Activated CD4-positive, alpha-beta T cell treated with anti-CD3 and anti-CD28 coated beads for 36 hours (primary cell): ENCODE measurements at regions of chr7 and their contacts with region 1.

Region 1: DNA sequence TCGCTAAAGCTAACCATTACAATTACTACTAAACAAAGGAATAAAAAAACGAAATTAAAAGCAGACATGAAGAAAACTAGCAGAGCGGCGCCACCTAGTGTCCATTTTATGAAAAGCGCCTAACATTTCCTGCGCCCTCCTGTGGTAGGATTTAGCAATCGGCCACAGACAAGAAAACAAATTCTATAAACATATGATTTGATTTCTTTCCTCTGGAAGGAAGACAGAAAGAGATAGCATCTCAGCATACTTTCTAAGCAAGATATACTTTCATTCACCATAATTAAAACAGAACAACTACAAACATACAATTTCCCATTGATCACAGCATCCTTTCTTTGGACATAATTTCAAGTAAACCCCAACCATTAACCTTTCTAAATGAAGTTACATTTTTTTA is 337.7 kb upstream of the NPVF start:
- DNase-seq: peak; percentile 77
- ATAC-seq: no peak
- H3K4me3 Mint-ChIP-seq: no peak overlapping the region
- H3K27ac Mint-ChIP-seq: no peak overlapping the region
- H3K4me1 Mint-ChIP-seq: no peaks in the 10 kb centered on the region
- H3K27me3 Mint-ChIP-seq: no peaks in the 10 kb centered on the region

Region 2: GRCh38 chr7:25259587-25260243 is 306.2 kb before region 1 on chr7:
- CTCF ChIA-PET with region 1: interaction called, 116 read pairs
- POLR2A ChIA-PET with region 1: no interaction called
- intact Hi-C with region 1: loop called (anchors 1 kb)
- DNase-seq: peak; percentile 81
- ATAC-seq: peak; percentile 83
- H3K4me3 Mint-ChIP-seq: no peak overlapping the region
- H3K27ac Mint-ChIP-seq: no peak overlapping the region
- H3K4me1 Mint-ChIP-seq: peaks cover 29% of the 10 kb centered on the region
- H3K27me3 Mint-ChIP-seq: peaks cover 3% of the 10 kb centered on the region

Region 3: DNA sequence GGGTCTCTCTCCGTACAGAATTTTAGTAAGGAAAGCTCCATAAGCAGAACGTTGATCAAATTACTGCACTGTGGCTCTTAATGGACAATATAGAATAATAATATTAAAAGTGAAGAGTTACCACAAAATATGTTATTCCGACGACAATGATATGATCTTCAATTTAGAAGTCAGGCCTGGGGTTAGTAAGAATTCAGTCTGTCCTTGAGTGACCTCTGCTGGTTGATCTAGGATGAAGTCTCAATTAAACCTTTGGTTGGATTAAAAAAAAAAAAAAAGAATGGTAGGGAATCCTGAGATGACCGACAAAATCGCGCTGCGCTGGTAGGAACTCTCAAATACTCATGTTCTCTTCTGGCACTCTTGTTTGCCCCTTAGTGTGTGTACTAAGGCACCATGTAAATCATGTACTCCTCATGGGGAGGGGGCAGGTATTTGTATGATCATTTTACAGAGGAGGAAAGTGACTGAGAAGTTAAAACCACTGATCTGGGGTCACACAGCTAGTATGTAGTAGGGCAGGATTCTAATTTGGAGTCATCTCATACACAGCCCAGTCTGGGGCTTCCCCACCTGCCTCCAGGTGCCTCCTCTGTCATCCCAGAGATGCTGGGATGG is 176.4 kb before region 1 on chr7:
- CTCF ChIA-PET with region 1: interaction called, 103 read pairs
- POLR2A ChIA-PET with region 1: no interaction called
- intact Hi-C with region 1: loop called (anchors 1 kb)
- DNase-seq: peak; percentile 19
- ATAC-seq: no peak
- H3K4me3 Mint-ChIP-seq: no peak overlapping the region
- H3K27ac Mint-ChIP-seq: no peak overlapping the region
- H3K4me1 Mint-ChIP-seq: no peaks in the 10 kb centered on the region
- H3K27me3 Mint-ChIP-seq: no peaks in the 10 kb centered on the region

Region 4: DNA sequence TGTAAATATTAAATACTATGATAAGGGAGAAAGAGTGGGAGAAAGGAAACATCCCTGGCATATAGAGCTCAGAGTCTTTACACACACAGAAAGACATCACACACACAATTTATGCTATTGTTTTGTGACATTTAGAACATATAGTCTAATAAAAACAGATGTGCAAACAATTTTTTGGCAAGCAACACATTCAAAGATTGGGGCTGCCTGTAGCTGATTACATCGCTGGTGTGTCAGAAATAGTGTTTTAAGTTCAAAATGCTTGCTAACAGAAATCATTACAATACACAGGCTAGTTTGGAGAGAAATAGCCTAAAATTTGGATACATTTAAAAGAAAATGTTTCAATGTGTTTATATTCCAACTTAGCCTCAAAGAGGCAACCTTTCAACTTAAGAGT is 80.9 kb before region 1 on chr7:
- CTCF ChIA-PET with region 1: no interaction called
- POLR2A ChIA-PET with region 1: no interaction called
- intact Hi-C with region 1: no loop called
- DNase-seq: no peak
- ATAC-seq: no peak
- H3K4me3 Mint-ChIP-seq: no peak overlapping the region
- H3K27ac Mint-ChIP-seq: no peak overlapping the region
- H3K4me1 Mint-ChIP-seq: no peaks in the 10 kb centered on the region
- H3K27me3 Mint-ChIP-seq: peaks cover 4% of the 10 kb centered on the region

Region 5: GRCh38 chr7:25578991-25579777 is 13.2 kb after region 1 on chr7:
- CTCF ChIA-PET with region 1: interaction called, 18 read pairs
- POLR2A ChIA-PET with region 1: no interaction called
- intact Hi-C with region 1: no loop called
- DNase-seq: no peak
- ATAC-seq: no peak
- H3K4me3 Mint-ChIP-seq: no peak overlapping the region
- H3K27ac Mint-ChIP-seq: no peak overlapping the region
- H3K4me1 Mint-ChIP-seq: no peaks in the 10 kb centered on the region
- H3K27me3 Mint-ChIP-seq: peaks cover 3% of the 10 kb centered on the region

Region 6: DNA sequence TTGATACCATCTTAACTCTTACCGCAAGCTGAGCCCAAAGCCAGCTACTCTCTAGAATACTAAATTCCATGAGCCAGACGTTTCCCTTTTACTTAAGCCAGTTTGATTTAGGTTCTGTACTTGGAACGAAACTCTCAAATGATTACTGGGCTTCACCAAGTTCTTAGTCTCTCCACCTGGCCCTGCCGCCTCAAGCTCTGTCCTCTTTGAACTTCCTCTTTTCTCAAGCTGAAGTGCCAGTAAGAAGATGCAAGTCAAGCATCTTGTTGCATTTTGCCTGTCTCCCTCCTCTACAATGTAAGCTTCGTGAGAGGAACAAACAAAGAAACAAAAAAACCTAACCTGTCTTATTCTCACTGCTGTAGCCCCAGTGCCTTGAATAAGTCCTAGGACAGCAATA is 20.6 kb after region 1 on chr7:
- CTCF ChIA-PET with region 1: interaction called, 23 read pairs
- POLR2A ChIA-PET with region 1: no interaction called
- intact Hi-C with region 1: no loop called
- DNase-seq: no peak
- ATAC-seq: no peak
- H3K4me3 Mint-ChIP-seq: no peak overlapping the region
- H3K27ac Mint-ChIP-seq: no peak overlapping the region
- H3K4me1 Mint-ChIP-seq: no peaks in the 10 kb centered on the region
- H3K27me3 Mint-ChIP-seq: peaks cover 2% of the 10 kb centered on the region

Region 7: DNA sequence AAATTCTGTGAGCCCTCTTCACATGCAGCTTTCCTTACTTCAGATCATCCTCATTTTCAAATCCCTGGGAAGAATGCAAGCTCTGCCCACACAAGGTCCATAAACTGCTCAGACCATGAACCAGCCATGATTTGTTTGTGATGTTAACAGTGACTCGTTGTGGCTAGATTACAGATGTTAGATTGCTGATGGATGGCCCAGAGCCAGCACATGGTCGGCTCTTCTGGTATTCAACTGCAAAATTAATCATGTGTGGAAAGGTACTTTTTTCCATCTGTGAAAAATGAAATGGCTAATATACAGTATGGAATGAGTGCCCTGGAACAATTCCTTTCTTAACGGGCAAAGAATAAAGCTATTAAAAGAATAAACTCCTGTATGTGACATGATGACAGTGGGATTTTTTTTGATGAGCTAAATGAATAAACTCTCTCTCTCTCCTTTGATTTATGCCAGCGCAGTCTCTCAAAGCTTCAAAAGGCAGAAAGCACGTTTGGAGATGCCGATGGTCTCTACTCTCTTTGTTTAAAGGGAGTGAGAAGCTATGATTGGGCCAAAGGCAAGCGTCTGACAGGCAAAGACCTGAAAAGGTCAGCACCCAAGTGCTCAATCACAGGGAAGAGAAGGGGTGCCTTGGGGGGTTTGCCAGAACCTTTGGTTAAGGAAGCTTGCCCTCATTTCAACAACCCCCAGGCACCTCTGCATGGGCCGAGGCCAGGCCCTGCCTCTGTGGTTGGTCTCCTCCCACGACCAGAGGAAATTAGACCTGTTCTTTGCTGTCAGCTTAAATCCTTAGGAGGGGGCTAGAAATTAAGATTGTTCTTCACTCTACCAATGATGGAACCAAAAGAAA is 142.0 kb after region 1 on chr7:
- CTCF ChIA-PET with region 1: no interaction called
- POLR2A ChIA-PET with region 1: no interaction called
- intact Hi-C with region 1: no loop called
- DNase-seq: no peak
- ATAC-seq: no peak
- H3K4me3 Mint-ChIP-seq: no peak overlapping the region
- H3K27ac Mint-ChIP-seq: no peak overlapping the region
- H3K4me1 Mint-ChIP-seq: no peaks in the 10 kb centered on the region
- H3K27me3 Mint-ChIP-seq: no peaks in the 10 kb centered on the region